Activated CD4-positive, alpha-beta T cell treated with anti-CD3 and anti-CD28 coated beads for 36 hours (primary cell): ENCODE measurements at regions of chr2 and their contacts with region 1.

Region 1: DNA sequence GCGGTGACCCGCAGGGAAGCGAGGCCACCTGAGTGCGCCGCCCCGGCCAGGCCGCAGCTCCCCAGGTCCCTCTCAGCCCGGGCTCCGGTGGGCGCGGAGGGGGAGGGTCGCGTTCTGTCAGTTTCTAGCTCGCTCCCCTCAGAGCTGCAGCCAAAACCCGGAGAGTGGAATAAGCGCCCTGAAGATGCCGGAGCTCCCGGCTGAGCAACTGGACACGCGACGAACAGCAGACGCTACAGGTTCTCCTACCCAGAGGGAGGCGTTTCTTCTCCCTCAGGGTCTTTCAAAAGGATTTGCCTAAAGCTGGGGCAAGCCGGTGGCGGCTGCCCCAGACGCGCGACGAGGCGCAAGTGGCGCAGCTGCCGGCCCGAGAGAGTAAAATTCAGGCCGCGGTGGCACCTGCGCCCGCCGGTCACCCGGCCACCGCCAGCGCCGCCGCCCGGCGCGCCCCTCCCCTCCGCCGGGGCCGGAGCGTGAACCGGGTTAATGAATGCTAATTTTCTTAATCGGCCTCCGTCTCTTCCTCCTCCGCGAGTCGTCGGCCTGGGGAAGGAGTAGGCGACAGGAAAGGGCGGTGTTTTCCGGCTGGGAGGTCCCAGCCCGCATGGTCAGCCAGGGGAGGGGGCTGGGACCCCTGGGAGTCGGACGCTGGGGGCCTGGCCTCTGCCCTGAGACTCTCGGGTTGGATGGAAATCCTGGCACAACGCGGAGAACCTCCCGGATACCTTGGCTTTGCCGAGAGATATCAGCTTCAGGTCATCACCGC is 845 bp upstream of the CDC42EP3 start:
- DNase-seq: peak; percentile 80
- ATAC-seq: peak; percentile 34
- H3K4me3 Mint-ChIP-seq: peak overlapping the region; percentile 83
- H3K27ac Mint-ChIP-seq: peak overlapping the region; percentile 83
- H3K4me1 Mint-ChIP-seq: peaks cover 40% of the 10 kb centered on the region
- H3K27me3 Mint-ChIP-seq: no peaks in the 10 kb centered on the region

Region 2: DNA sequence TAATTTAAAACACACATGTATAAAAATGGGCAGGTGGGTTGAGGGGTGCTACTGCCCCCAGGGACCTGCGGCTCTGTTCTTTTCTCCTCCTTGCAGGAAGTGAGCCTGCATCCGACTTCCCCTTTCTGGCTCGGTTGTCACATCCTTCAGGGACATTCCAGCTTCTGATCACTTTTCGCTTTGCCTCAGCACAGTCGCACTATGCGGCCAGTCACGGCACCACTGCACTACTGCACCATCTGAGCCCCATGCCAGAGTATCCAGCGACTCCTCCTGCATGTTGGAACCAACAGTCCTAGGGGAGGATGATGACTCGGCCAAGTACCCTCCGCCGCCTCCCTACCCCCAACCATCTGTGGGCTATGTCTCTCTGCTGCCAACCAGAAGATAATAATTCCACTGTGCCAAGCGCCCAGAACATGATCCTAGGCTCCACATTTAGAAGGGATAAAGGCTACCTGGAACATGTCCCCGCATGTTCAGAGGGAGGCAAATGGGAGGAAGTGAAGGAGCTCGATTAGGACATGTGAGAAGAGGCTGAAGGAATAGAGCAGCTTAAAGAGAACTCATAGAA is 18.4 kb before region 1 on chr2:
- CTCF ChIA-PET with region 1: interaction called, 3 read pairs
- POLR2A ChIA-PET with region 1: interaction called, 6 read pairs
- intact Hi-C with region 1: loop called in 1 of 2 experiments (anchors 2 kb)
- DNase-seq: peak; percentile 58
- ATAC-seq: peak; percentile 60
- H3K4me3 Mint-ChIP-seq: peak overlapping the region; percentile 15
- H3K27ac Mint-ChIP-seq: peak overlapping the region; percentile 68
- H3K4me1 Mint-ChIP-seq: peaks cover 89% of the 10 kb centered on the region
- H3K27me3 Mint-ChIP-seq: no peaks in the 10 kb centered on the region

Region 3: GRCh38 chr2:37683921-37684780 is 11.9 kb after region 1 on chr2:
- CTCF ChIA-PET with region 1: no interaction called
- POLR2A ChIA-PET with region 1: interaction called, 4 read pairs
- intact Hi-C with region 1: loop called in 1 of 2 experiments (anchors 1 kb)
- DNase-seq: no peak
- ATAC-seq: peak; percentile 95
- H3K4me3 Mint-ChIP-seq: peak overlapping the region; percentile 32
- H3K27ac Mint-ChIP-seq: peak overlapping the region; percentile 95
- H3K4me1 Mint-ChIP-seq: peaks cover 48% of the 10 kb centered on the region
- H3K27me3 Mint-ChIP-seq: no peaks in the 10 kb centered on the region